ENCODE measurements at regions of chr22 and their contacts with region 1.

Region 1: GRCh38 chr22:36387752-36388518 is at the start of gene MYH9:
- DNase-seq: peak; percentile 100
- H3K4me3 Mint-ChIP-seq: peak within 1 kb of the TSS; percentile 84
- H3K27ac Mint-ChIP-seq: peak within 1 kb of the TSS; percentile 95
- H3K4me1 Mint-ChIP-seq: peaks cover 46% of the 10 kb centered on the region
- H3K27me3 Mint-ChIP-seq: no peaks in the 10 kb centered on the region
- total RNA-seq, gene MYH9: 840 to 865 TPM

Region 2: DNA sequence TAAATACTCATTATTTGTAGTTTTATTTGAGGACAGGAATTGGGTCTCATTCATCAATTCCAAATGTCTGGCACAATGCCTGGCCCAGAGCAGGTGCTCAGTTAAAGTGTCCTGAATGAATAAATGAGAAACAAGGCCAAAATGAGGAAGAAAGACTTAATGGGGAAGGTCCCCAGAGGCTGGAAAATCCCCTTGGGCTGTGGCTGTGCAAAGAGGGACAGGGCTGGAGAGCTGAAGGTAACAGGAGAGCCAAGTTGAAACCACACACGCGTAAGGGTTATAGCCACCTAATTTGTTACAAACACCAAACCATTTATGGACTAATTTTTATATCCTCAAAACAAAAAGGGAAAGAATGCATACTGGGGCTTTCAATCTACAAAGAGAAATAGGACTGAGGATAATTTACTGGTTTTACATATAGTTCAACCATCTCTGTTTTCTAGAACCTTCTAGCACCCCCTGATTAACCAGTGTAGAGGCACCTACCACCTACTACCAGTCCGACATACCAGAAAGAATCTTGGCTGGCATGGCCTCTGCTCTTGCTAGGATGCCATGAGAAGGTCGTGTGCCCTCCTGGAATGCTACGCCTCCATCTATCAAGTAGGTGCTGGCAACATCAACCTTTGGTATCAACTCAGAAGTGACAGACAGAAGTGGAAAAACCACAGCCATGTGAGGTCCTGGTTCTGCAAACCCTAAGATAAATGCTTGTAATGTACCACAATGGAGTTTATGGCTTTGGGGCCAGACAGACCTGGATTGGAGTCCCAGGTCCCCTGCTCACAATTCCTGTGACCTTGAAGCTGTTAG is 28.5 kb before region 1 on chr22:
- CTCF ChIA-PET with region 1: interaction called, 20 read pairs
- POLR2A ChIA-PET with region 1: interaction called, 10 read pairs
- DNase-seq: no peak
- H3K4me3 Mint-ChIP-seq: peak overlapping the region; percentile 7
- H3K27ac Mint-ChIP-seq: peak overlapping the region; percentile 79
- H3K4me1 Mint-ChIP-seq: peaks cover 97% of the 10 kb centered on the region
- H3K27me3 Mint-ChIP-seq: no peaks in the 10 kb centered on the region

Region 3: GRCh38 chr22:36365020-36365411 is 22.9 kb before region 1 on chr22:
- CTCF ChIA-PET with region 1: interaction called, 20 read pairs
- POLR2A ChIA-PET with region 1: interaction called, 36 read pairs
- DNase-seq: peak; percentile 90
- H3K4me3 Mint-ChIP-seq: peak overlapping the region; percentile 51
- H3K27ac Mint-ChIP-seq: peak overlapping the region; percentile 85
- H3K4me1 Mint-ChIP-seq: peaks cover 97% of the 10 kb centered on the region
- H3K27me3 Mint-ChIP-seq: no peaks in the 10 kb centered on the region

Region 4: DNA sequence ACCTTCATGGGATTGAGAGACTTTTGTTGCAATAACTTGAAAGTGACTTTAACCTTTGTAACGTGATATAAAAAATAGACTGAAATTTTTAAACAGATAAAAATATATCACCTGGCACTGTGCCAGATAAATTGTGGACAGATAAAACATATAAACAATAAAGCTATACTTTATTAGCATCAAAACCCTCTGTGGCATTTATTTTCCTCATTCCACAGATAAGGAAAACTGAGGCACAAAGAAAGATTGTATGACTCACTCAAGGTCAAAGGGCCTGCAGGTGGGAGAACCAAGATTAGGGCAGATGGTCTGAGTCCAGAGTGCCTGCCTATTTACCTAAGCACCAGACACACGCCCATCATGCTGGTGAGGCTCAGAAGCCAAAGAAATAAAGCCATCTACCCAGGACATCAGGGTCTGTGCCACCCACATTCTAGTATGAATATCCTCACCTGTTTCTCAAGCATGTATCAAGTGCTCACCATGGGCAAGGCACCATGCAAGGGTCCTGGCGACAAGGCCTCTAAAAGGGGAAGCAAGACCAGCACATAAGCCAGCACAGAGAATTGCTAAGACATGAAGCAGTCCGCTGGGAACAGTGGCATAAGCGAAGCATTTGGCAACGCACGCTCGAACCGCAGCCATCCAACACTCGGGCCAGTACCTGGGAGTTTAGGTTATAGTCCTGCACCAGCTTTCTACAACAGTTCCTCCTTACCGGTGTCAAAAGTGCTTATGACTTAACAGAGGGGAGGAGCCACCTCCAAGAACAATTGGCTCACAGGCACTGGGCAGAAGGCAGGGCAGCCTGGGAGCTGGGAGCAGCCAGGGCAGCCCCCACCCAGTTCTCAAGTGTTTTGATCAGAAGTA is 17.8 kb before region 1 on chr22:
- CTCF ChIA-PET with region 1: interaction called, 20 read pairs
- POLR2A ChIA-PET with region 1: interaction called, 101 read pairs
- DNase-seq: no peak
- H3K4me3 Mint-ChIP-seq: peak overlapping the region; percentile 74
- H3K27ac Mint-ChIP-seq: peak overlapping the region; percentile 92
- H3K4me1 Mint-ChIP-seq: peaks cover 97% of the 10 kb centered on the region
- H3K27me3 Mint-ChIP-seq: no peaks in the 10 kb centered on the region

Region 5: GRCh38 chr22:36405671-36406538 is 18.0 kb after region 1 on chr22:
- CTCF ChIA-PET with region 1: no interaction called
- POLR2A ChIA-PET with region 1: interaction called, 65 read pairs
- DNase-seq: peak; percentile 80
- H3K4me3 Mint-ChIP-seq: peak overlapping the region; percentile 22
- H3K27ac Mint-ChIP-seq: peak overlapping the region; percentile 99
- H3K4me1 Mint-ChIP-seq: peaks cover 68% of the 10 kb centered on the region
- H3K27me3 Mint-ChIP-seq: no peaks in the 10 kb centered on the region

Region 6: DNA sequence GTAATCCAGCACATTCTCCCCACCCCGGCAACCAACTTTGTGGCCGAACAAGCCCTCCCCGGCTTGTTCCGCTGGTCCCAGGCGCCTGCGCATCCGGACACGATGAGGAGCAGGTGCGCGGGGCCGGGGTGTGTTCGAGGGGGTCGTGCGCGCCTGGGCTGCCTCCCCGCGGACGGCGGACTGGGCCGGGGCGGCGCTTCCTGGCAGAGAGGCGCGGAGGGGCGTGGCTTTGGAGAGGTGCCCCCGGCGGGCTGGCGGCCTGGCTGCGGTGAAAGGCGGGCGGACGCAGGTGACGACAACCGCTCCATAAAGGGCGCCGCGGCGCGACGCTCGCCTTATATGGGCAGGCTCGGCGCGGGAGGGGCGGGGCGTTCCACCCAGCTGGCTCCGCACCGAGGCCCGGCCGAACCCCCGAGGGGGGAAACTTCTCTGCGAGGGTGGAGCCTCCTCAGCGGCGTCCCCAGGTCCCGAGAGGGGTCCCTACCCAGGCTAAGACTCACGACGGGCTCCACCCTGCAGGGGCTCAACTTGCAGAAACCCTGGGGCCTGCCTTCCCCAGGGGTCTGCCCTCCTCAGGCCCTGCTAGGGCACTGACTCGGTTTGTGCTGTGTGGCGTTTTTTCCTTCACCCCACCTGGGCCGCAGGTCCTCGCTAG is 67.1 kb after region 1 on chr22:
- CTCF ChIA-PET with region 1: interaction called, 6 read pairs
- POLR2A ChIA-PET with region 1: interaction called, 19 read pairs
- DNase-seq: peak; percentile 97
- H3K4me3 Mint-ChIP-seq: peak overlapping the region; percentile 72
- H3K27ac Mint-ChIP-seq: peak overlapping the region; percentile 95
- H3K4me1 Mint-ChIP-seq: peaks cover 61% of the 10 kb centered on the region
- H3K27me3 Mint-ChIP-seq: no peaks in the 10 kb centered on the region